ENCODE measurements at regions of chr21 and their contacts with region 1.

Region 1: GRCh38 chr21:29477941-29478340 is 179.2 kb downstream of the BACH1 start:
- DNase-seq: no peak

Region 2: GRCh38 chr21:29568020-29568697 is 90.2 kb after region 1 on chr21:
- intact Hi-C with region 1: loop called in 1 of 2 experiments (anchors 10 kb)
- DNase-seq: no peak

Region 3: GRCh38 chr21:29849735-29850176 is 371.8 kb after region 1 on chr21:
- intact Hi-C with region 1: loop called in 1 of 2 experiments (anchors 5 kb)
- DNase-seq: no peak